Natural killer cell (primary cell): ENCODE measurements at regions of chr3 and their contacts with region 1.

Region 1: GRCh38 chr3:72447059-72447946 is 400.9 kb downstream of the SHQ1 start:
- DNase-seq: peak; percentile 97
- ATAC-seq: peak; percentile 94 to 99 (median 97)
- H3K4me3 ChIP-seq: peak overlapping the region; percentile 66
- H3K4me3 Mint-ChIP-seq: peak overlapping the region; percentile 80
- H3K27ac ChIP-seq: peak overlapping the region; percentile 28
- H3K27ac Mint-ChIP-seq: peak overlapping the region; percentile 62 to 92
- H3K4me1 ChIP-seq: peaks cover 12% of the 10 kb centered on the region
- H3K4me1 Mint-ChIP-seq: peaks cover 40 to 42% of the 10 kb centered on the region in 2 donors
- H3K27me3 ChIP-seq: no peaks in the 10 kb centered on the region
- H3K27me3 Mint-ChIP-seq: peaks cover 18 to 28% of the 10 kb centered on the region in 2 donors
- CTCF ChIP-seq: no peak

Region 2: DNA sequence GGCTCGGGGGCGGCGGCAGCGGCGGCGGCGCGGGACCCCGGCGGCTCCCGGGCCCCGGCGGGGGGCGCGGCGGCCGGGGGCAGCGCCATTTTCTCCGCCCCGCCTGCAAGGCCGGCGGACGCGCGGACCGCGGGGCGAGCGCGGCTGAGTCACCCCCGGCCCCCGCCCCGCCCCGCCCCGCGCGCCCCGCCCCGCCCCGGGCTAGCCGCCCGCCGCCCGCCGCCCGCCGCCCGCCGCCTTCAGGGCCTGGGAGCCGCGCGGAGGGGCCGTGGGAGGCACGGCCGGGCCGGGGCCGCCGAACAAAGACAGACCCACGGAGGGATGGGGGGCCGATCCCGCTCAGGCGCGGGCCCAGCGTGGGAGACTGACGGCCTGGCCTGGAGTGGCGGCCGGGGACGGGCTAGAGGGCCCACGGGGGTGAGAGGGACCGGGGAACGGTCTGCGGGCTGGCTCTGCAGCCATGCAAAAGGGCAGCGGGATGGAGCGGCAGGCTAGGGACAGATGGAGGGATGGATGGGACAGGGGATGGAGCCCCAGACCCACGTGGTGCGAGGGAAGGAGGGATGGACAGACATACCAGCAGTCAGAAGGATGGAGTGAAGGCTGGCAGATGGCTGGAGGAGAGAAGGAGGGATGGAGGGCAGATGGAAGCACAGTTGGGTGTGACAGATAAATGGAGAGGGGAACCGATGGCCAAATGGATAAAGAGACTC is 721.9 kb before region 1 on chr3 and contains the start of gene EIF4E3:
- intact Hi-C with region 1: loop called (anchors 10 kb)
- DNase-seq: peak; percentile 51 to 76
- ATAC-seq: peak; percentile 57 to 75 (median 74)
- H3K4me3 ChIP-seq: peak within 1 kb of the TSS; percentile 78
- H3K4me3 Mint-ChIP-seq: peak within 1 kb of the TSS; percentile 100
- H3K27ac ChIP-seq: peak within 1 kb of the TSS; percentile 72
- H3K27ac Mint-ChIP-seq: peak within 1 kb of the TSS; percentile 95 to 97
- H3K4me1 ChIP-seq: peaks cover 50% of the 10 kb centered on the region
- H3K4me1 Mint-ChIP-seq: peaks cover 60 to 67% of the 10 kb centered on the region in 2 donors
- H3K27me3 ChIP-seq: no peaks in the 10 kb centered on the region
- H3K27me3 Mint-ChIP-seq: no peaks in the 10 kb centered on the region
- CTCF ChIP-seq: no peak
- total RNA-seq, gene EIF4E3: 44.9 to 52.2 (median 46.7) TPM

Region 3: DNA sequence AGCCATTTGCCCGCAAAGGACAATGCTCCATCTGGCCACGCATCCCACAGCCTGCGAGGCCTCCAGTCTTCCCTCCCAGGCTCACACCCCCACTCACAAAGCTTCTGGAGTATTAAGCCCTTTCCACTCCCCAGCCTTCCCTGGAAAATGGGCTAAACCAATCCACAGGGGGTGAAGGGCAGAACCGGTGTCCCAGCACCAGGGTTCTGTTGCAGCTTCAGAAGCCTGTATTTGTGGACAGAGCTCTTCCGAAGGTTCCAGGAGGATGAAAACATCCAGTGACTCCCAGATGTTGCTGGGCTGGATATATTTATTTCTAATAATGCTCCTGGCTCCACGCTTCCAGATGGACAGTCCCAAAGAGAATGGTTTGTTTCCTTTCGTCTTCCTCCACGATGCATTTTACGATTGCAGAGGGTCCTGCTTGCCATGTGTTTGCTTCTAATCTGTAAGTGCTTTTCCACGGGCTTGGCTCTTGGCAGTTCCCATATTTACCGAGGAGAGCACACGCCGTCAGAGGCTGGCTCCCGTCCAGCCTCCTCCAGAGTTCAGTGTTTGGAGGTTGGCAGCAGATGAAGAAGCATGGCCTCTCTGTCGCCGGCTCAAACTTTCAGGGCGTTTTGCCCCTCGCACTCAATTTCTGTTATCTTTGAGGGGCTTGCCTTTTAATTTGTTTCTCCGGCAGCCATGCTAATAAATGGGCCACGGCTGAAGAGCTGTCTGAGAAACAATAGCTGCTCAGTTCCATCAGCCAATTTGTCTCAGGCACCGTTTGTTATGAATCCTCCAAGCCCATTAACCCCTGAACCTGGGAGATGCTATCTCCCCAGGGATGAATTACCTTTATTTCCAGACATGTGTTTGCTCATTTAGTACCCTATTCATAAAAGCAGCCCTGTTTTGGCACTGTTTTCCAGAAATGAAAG is 294.5 kb before region 1 on chr3:
- intact Hi-C with region 1: no loop called
- DNase-seq: no peak
- ATAC-seq: no peak
- H3K4me3 ChIP-seq: no peak overlapping the region
- H3K4me3 Mint-ChIP-seq: no peak overlapping the region
- H3K27ac ChIP-seq: no peak overlapping the region
- H3K27ac Mint-ChIP-seq: no peak overlapping the region
- H3K4me1 ChIP-seq: no peaks in the 10 kb centered on the region
- H3K4me1 Mint-ChIP-seq: no peaks in the 10 kb centered on the region
- H3K27me3 ChIP-seq: no peaks in the 10 kb centered on the region
- H3K27me3 Mint-ChIP-seq: peaks cover 0 to 7% of the 10 kb centered on the region in 2 donors
- CTCF ChIP-seq: no peak

Region 4: DNA sequence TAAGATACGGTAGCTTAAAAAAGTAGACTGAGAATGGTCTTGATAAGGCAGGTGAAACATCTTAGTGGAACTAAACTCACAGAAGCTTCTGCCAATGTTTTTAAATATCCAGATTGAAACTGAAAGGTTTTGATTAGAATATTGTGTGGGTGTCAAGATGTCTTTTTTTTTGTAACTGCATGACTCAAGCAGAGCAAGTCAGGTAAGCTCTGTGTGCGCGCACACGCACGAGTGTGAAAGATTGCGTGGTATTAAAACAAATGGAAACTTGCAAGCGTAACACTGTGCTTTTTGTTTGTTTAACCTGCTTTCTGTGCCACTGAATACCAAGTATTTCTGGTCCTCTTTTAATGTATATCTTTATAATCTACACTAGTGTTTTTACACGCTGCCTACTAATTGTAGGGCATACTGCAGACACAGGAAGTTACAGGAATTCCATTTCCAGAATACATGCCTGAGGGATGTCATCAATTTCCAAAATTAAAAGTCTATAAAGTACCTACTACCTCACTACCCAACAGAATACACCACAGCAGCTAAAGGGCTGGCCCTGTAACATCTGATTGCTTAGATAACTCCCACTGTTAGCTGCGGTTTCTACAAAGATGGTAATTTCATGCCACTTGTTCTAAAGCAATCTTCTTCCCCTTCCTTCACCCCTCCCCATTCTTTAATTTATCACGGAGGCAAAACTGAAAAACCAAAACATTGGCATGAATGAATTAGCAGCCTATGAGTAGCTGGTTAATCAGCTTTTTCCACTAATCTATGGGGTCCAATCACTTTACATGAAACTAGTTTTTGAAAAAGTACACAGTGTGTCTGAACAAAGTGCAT is 71.8 kb before region 1 on chr3:
- intact Hi-C with region 1: loop called (anchors 5 kb)
- DNase-seq: peak in 1 of 2 donors; percentile 41
- ATAC-seq: peak; percentile 65 to 86 (median 78)
- H3K4me3 ChIP-seq: no peak overlapping the region
- H3K4me3 Mint-ChIP-seq: peak overlapping the region; percentile 59
- H3K27ac ChIP-seq: no peak overlapping the region
- H3K27ac Mint-ChIP-seq: peak overlapping the region; percentile 34 to 54
- H3K4me1 ChIP-seq: peaks cover 7% of the 10 kb centered on the region
- H3K4me1 Mint-ChIP-seq: peaks cover 41 to 43% of the 10 kb centered on the region in 2 donors
- H3K27me3 ChIP-seq: no peaks in the 10 kb centered on the region
- H3K27me3 Mint-ChIP-seq: no peaks in the 10 kb centered on the region
- CTCF ChIP-seq: no peak

Region 5: GRCh38 chr3:72401005-72401545 is 46.2 kb before region 1 on chr3:
- intact Hi-C with region 1: no loop called
- DNase-seq: no peak
- ATAC-seq: no peak
- H3K4me3 ChIP-seq: no peak overlapping the region
- H3K4me3 Mint-ChIP-seq: no peak overlapping the region
- H3K27ac ChIP-seq: no peak overlapping the region
- H3K27ac Mint-ChIP-seq: no peak overlapping the region
- H3K4me1 ChIP-seq: no peaks in the 10 kb centered on the region
- H3K4me1 Mint-ChIP-seq: peaks cover 76 to 79% of the 10 kb centered on the region in 2 donors
- H3K27me3 ChIP-seq: no peaks in the 10 kb centered on the region
- H3K27me3 Mint-ChIP-seq: no peaks in the 10 kb centered on the region
- CTCF ChIP-seq: no peak

Region 6: DNA sequence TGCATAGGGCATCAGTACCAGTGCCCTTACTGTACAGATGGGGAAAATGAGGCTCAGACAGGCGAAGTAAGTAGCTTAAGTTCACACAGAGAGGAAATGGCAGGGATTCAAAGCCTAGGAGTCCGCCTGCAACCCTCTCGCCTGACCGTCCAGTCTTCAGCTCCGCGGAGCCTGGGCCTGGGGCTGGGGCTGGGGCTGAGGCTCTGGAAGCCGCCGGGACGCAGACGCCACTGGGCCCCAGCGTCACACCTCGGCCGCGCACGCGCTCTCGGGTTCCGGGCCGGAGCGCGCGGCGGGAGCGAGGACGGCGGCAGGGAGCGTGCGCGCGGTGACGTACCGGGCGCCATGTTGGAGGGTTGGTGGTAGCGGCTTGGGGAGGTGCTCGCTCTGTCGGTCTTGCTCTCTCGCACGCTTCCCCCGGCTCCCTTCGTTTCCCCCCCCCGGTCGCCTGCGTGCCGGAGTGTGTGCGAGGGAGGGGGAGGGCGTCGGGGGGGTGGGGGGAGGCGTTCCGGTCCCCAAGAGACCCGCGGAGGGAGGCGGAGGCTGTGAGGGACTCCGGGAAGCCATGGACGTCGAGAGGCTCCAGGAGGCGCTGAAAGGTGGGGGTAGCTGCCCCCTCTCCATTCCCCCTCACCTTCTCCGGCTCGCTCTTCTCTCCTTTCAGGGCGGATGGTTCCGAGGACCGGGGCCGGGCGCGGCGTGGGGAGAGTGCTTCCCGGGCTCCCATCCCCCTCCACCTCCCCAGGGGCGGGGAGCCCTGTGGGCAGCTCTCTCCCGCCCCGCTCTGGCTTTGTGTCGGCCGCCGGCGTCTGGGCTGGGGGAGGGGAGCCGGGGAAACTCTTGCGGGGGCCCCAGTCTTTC is 549.4 kb after region 1 on chr3 and contains the start of gene PPP4R2:
- intact Hi-C with region 1: loop called (anchors 10 kb)
- DNase-seq: peak; percentile 93 to 97
- ATAC-seq: peak; percentile 86 to 96 (median 89)
- H3K4me3 ChIP-seq: peak within 1 kb of the TSS; percentile 97
- H3K4me3 Mint-ChIP-seq: peak within 1 kb of the TSS; percentile 88
- H3K27ac ChIP-seq: peak within 1 kb of the TSS; percentile 97
- H3K27ac Mint-ChIP-seq: peak within 1 kb of the TSS; percentile 91 to 95
- H3K4me1 ChIP-seq: peaks cover 19% of the 10 kb centered on the region
- H3K4me1 Mint-ChIP-seq: peaks cover 35 to 38% of the 10 kb centered on the region in 2 donors
- H3K27me3 ChIP-seq: no peaks in the 10 kb centered on the region
- H3K27me3 Mint-ChIP-seq: no peaks in the 10 kb centered on the region
- CTCF ChIP-seq: no peak
- total RNA-seq, gene PPP4R2: 50.4 to 72.8 (median 60.1) TPM